ENCODE measurements at regions of chr2 and their contacts with region 1.

Region 1: GRCh38 chr2:60674524-60675165 is 81.4 kb upstream of the PAPOLG start:
- DNase-seq: peak; percentile 82
- H3K4me3 Mint-ChIP-seq: no peak overlapping the region
- H3K27ac Mint-ChIP-seq: no peak overlapping the region
- H3K4me1 Mint-ChIP-seq: peaks cover 4% of the 10 kb centered on the region
- H3K27me3 Mint-ChIP-seq: peaks cover 12% of the 10 kb centered on the region

Region 2: GRCh38 chr2:60661073-60661738 is 13.4 kb before region 1 on chr2:
- CTCF ChIA-PET with region 1: interaction called, 11 read pairs
- POLR2A ChIA-PET with region 1: no interaction called
- DNase-seq: no peak
- H3K4me3 Mint-ChIP-seq: no peak overlapping the region
- H3K27ac Mint-ChIP-seq: no peak overlapping the region
- H3K4me1 Mint-ChIP-seq: peaks cover 2% of the 10 kb centered on the region
- H3K27me3 Mint-ChIP-seq: peaks cover 13% of the 10 kb centered on the region

Region 3: GRCh38 chr2:60695793-60696192 is 21.1 kb after region 1 on chr2:
- CTCF ChIA-PET with region 1: interaction called, 10 read pairs
- POLR2A ChIA-PET with region 1: no interaction called
- DNase-seq: no peak
- H3K4me3 Mint-ChIP-seq: no peak overlapping the region
- H3K27ac Mint-ChIP-seq: no peak overlapping the region
- H3K4me1 Mint-ChIP-seq: no peaks in the 10 kb centered on the region
- H3K27me3 Mint-ChIP-seq: peaks cover 11% of the 10 kb centered on the region

Measured in activated CD4-positive, alpha-beta memory T cell treated with anti-CD3 and anti-CD28 coated beads, Interleukin-2, amount 10 ng/mL, durations not matched to agents 7 days and 5 days (primary cell).